ENCODE measurements at regions of chrX and their contacts with region 1.

Region 1: DNA sequence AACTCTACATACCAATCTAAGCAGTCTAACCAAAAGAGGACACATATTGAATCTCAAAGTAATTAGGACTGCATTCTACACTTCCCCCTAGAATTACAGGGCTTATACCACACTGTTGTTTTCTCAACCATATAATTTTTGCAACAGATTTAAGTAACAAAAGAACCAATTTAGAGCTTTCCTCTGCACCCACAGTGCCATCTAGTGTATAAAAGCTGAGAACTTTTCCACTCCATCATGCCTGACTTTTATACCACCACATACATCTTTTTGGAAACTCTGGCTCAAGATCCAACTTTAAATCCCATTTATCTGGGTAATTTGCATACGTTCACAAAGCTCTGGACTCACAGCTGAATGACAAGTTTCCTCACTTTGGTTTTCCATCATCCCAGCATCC is 99.5 kb downstream of the EFHC2 start:
- DNase-seq: peak in 7 of 42 donors; percentile 16 to 56 (median 29)

Region 2: DNA sequence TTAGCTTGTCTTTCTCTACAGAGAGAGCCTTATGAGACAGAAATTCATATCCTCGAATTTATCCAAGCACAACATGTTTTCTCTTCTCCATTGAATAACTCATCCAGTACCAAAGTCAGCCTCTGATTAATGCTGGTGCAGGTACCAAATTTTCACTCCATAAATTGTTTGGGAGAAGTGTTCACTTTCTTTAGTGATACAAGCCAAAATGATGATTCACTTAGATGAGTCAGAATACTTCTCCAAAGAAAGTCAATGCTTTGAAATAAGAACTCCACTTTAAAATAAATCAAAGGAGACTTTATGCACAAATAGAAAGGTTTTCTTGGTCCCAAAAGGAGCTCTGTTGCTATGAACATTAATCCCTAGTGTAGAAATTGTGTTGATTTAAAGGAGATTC is 422.0 kb before region 1 on chrX:
- intact Hi-C with region 1: loop called (anchors 10 kb)
- DNase-seq: no peak

Region 3: DNA sequence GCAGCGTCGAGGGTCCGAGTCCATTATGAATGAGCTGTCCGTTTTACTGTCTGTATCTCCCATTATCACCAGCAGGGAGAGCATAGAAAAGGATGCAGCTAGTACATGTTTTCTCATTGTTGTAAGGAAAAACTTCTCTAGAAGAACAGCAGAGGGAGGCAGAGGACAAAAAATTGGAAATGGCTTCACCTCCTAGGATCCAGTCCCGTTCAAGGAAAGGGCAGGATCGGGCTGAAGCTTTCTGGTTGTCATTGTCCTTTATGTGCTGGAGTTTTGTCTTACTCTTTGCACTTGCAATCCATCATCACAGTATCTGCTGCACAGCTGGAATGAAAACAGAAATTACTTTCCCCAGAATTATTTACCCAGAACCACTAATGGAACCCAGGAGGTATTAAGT is 285.5 kb before region 1 on chrX:
- intact Hi-C with region 1: loop called (anchors 5 kb)
- DNase-seq: peak in 25 of 42 donors; percentile 18 to 80 (median 50)

Region 4: DNA sequence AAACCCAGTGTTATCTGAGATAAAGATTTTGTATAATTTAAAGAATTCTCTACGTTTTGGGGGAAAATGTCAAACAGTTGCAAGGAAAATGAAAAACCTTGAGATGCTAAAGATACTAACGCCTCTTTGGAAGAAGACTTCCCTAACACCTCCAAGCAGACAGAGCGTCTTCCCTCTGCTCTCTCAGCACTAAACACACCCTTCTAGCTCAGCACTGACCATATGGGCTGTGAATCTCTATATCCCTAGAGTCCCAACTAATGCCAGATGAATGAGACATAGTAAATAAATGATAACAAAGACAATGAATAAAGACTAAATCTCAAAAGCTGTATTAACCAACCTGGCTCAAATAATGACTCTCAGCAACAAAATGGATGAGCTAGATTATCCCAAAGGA is 285.3 kb after region 1 on chrX:
- intact Hi-C with region 1: no loop called
- DNase-seq: no peak